Gastrocnemius medialis (tissue), 4 donors: ENCODE measurements at regions of chrX and their contacts with region 1.

Region 1: GRCh38 chrX:103918581-103919269 is 43.7 kb upstream of the TMSB15B start:
- DNase-seq: peak in 1 of 2 donors; percentile 16
- ATAC-seq: peak in 1 of 2 donors; percentile 33
- H3K4me3 ChIP-seq: peak overlapping the region; percentile 50 to 56 (median 52)
- H3K27ac ChIP-seq: peak overlapping the region; percentile 32 to 64 (median 60)
- H3K4me1 ChIP-seq: no peaks in the 10 kb centered on the region
- H3K27me3 ChIP-seq: peaks cover 0 to 32% (median 5%) of the 10 kb centered on the region in 3 donors
- CTCF ChIP-seq: no peak
- POLR2A ChIP-seq: no peak

Region 2: DNA sequence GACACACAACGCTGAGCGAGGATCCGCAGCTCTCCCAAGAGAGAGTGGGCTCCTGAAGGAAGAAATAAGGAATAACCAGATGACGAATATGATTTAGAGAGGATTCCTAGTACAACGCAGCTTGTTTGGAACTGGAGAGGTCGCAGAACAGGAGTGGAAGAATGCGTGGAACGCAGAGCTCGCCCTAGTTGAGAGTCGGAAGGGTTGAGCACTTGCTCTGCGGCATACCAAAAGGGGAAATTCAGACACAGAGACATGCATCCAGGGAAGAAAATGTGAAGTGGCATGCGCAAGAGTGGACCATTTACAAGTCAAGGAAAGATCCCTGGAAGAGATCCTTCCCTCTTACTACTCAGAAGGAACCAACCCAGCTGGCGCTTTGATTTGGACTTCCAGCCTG is 88.5 kb after region 1 on chrX:
- in situ Hi-C with region 1: no loop called
- intact Hi-C with region 1: loop called (anchors 1 kb)
- DNase-seq: no peak
- ATAC-seq: no peak
- H3K4me3 ChIP-seq: no peak overlapping the region
- H3K27ac ChIP-seq: no peak overlapping the region
- H3K4me1 ChIP-seq: no peaks in the 10 kb centered on the region
- H3K27me3 ChIP-seq: no peaks in the 10 kb centered on the region
- CTCF ChIP-seq: no peak
- POLR2A ChIP-seq: no peak